HEK293 (cell line): ENCODE measurements at regions of chr17 and their contacts with region 1.

Region 1: GRCh38 chr17:82267575-82268379 is 5.7 kb downstream of the CSNK1D start:
- H3K4me3 ChIP-seq: peak overlapping the region; percentile 14
- H3K27ac ChIP-seq: peak overlapping the region; percentile 39
- H3K4me1 ChIP-seq: peaks cover 26% of the 10 kb centered on the region
- CTCF ChIP-seq: peak; percentile 51; the same call in 1 of the 2 replicates

Region 2: GRCh38 chr17:82200743-82201497 is 66.9 kb before region 1 on chr17:
- CTCF ChIA-PET with region 1: no interaction called
- POLR2A ChIA-PET with region 1: no interaction called
- H3K4me3 ChIP-seq: no peak overlapping the region
- H3K27ac ChIP-seq: no peak overlapping the region
- H3K4me1 ChIP-seq: no peaks in the 10 kb centered on the region
- CTCF ChIP-seq: no peak

Region 3: GRCh38 chr17:82213251-82214021 is 54.3 kb before region 1 on chr17:
- CTCF ChIA-PET with region 1: no interaction called
- POLR2A ChIA-PET with region 1: no interaction called
- H3K4me3 ChIP-seq: peak overlapping the region; percentile 79
- H3K27ac ChIP-seq: peak overlapping the region; percentile 81
- H3K4me1 ChIP-seq: 0 out of 2 replicates have a peak, but pooled peaks cover 7% of the 10 kb centered on the region
- CTCF ChIP-seq: no peak

Region 4: DNA sequence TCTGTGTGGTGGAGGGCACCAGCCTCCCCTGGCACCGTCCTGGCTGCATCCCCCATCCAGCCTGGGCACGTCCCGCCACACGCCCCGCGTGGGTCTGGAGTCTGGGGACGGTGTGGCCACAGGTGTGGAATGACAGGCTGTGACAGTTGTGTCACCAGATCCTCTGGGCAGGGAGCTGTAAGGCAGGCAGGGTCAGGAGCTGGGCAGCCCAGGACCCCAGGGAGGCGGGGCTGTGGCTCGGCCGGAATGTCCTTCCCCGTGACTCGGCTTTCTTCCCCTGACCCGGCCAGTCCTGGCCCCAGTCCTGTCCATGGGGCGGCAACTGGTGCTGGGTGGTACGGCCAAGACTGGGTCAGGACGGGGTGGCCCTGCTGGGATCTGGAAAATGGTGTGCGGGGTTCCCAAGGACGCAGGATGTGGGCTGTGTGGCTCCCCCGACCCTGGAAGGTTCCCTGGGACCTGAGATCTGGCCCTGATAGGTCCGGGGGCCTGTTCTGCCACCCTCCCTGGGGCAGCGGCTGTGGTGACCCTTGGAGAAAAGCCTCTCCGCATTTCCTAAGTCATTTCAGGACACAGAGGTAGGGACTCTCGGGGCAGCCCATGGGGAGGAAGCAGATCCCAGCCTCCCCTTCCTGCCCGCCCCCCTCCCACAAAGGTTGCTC is 42.3 kb before region 1 on chr17:
- CTCF ChIA-PET with region 1: no interaction called
- POLR2A ChIA-PET with region 1: no interaction called
- H3K4me3 ChIP-seq: no peak overlapping the region
- H3K27ac ChIP-seq: no peak overlapping the region
- H3K4me1 ChIP-seq: no peaks in the 10 kb centered on the region
- CTCF ChIP-seq: no peak

Region 5: GRCh38 chr17:82283208-82283749 is 15.5 kb after region 1 on chr17:
- CTCF ChIA-PET with region 1: interaction called, 4 read pairs
- POLR2A ChIA-PET with region 1: interaction called, 22 read pairs
- H3K4me3 ChIP-seq: no peak overlapping the region
- H3K27ac ChIP-seq: no peak overlapping the region; the same call in 1 of the 2 replicates
- H3K4me1 ChIP-seq: peaks cover 10% of the 10 kb centered on the region
- CTCF ChIP-seq: no peak

Region 6: DNA sequence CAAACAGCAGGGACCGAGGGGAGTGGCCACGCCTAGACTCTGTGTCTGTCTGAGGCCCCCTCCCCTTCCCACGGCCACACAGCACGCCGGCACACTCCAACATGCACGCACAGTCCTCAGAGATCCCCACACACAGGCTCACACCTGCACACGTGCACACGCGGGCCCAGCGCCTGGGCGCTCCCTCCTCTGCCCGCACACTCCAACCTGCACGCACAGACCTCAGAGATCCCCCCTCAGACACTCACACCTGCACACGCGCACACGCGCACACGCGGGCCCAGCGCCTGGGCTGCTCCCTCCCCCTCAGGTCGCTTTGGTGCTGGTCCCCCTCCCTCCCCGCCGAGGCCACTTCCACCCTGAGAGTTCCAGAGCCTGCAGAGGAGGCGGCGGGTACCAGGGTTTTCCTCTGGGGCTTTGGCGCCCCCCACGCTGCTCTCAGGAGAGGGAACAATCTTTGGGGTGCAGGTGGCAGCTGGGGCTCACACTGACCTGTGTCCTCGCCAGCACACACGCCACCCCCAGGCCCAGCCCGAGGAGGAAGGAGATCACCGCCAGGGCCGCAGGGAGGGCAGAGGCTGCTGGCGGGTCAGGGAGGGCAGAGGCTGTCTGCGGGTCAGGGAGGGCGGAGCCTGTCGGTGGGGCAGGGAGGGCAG is 48.1 kb after region 1 on chr17:
- CTCF ChIA-PET with region 1: no interaction called
- POLR2A ChIA-PET with region 1: no interaction called
- H3K4me3 ChIP-seq: no peak overlapping the region
- H3K27ac ChIP-seq: no peak overlapping the region
- H3K4me1 ChIP-seq: no peaks in the 10 kb centered on the region
- CTCF ChIP-seq: no peak